Activated CD4-positive, alpha-beta memory T cell treated with anti-CD3 and anti-CD28 coated beads, Interleukin-2, amount 10 ng/mL, durations not matched to agents 7 days and 5 days (primary cell): ENCODE measurements at regions of chr10 and their contacts with region 1.

Region 1: DNA sequence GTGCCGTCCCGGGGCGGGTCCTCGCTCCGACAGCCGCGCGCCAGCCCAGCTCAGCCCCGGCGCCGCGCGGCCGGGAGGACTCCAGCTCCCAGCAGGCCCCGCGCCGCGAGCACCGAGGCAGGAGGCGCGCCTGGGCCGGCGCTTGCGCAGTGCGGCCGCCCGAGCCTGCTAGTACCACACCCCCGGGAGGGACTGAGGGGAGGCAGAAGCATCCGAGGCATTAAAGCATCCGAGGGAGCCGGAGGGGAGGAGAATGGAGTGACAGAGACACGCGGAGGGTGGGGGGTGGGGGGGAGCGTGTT is at the start of gene GRK5:
- DNase-seq: peak; percentile 97
- H3K4me3 Mint-ChIP-seq: peak within 1 kb of the TSS; percentile 92
- H3K27ac Mint-ChIP-seq: peak within 1 kb of the TSS; percentile 97
- H3K4me1 Mint-ChIP-seq: peaks cover 46% of the 10 kb centered on the region
- H3K27me3 Mint-ChIP-seq: no peaks in the 10 kb centered on the region
- total RNA-seq, gene GRK5: 29.8 to 30.6 TPM

Region 2: DNA sequence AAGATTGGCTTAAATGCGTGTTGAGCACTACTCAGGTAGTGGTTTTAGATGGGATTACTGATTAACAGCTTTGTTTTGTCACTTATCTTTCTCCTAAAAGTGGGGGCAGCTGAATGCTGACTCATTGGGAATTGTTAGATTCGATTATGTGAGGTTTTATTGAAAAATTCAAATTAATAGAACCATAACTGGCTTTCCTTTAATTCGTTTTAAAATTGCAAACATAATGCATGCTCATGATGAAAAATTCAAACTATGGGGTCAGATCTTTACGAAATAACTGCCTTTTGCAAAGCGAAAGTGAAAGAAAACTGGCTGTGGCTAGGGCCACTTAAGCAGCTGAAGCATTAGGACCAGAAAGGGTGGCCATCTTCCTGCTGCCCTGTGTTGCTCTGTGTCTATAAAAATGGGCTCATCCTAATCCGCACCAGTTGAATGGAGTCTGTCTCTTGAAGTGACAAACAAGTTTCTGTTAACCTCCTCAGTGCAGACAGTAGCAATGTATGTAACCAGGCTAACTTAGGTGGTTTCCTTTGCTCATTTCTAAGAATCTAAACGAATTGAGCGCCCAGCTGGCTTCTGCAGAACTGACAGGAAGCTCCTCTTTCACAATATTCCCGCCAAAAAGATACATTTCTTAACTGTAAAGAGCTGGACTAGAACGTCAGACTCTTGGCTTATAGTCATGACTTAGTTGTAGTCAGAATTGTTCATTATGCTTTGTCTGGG is 75.6 kb before region 1 on chr10:
- CTCF ChIA-PET with region 1: interaction called, 3 read pairs
- POLR2A ChIA-PET with region 1: interaction called, 12 read pairs
- DNase-seq: peak; percentile 72
- H3K4me3 Mint-ChIP-seq: peak overlapping the region; percentile 73
- H3K27ac Mint-ChIP-seq: peak overlapping the region; percentile 98
- H3K4me1 Mint-ChIP-seq: peaks cover 67% of the 10 kb centered on the region
- H3K27me3 Mint-ChIP-seq: no peaks in the 10 kb centered on the region

Region 3: DNA sequence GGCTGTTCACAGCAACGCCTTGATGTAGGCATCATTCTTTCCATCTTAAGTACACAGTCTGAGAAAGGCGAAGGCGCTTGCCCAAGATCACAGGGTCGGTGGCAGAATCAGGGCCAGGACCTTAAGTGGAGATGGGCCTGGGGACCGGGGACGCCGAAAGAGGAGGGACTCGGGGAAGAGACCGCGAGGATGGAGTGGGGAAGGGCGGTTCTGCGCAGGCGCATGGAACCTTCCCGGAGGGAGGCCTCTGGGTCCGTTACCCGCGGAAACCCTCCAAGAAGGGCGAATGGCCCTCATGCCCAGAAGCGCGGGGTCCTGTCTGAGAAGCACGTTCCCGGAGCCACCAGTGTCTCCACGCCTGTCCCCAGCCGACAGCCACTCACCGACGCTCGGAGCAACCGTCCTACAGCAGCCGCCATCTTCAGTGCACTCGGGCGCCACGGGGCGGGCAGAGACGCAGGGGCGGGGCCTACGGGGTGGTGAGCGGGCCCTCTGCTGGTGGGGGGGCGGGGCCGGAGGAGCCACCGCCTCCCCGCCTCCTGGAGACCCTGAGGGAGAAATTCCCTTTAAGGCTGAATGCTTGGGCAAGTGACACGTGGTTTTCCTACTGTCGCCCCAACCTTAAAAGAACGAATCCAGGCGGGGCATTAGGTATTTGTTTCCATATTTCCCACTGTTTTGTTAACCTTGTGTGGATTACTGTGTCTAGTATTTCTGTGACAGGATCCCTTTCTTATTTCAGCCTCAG is 28.8 kb before region 1 on chr10 and contains the start of gene PRDX3:
- CTCF ChIA-PET with region 1: interaction called, 6 read pairs
- POLR2A ChIA-PET with region 1: interaction called, 11 read pairs
- DNase-seq: peak; percentile 94
- H3K4me3 Mint-ChIP-seq: peak within 1 kb of the TSS; percentile 96
- H3K27ac Mint-ChIP-seq: peak within 1 kb of the TSS; percentile 97
- H3K4me1 Mint-ChIP-seq: peaks cover 41% of the 10 kb centered on the region
- H3K27me3 Mint-ChIP-seq: no peaks in the 10 kb centered on the region
- total RNA-seq, gene PRDX3: 115 to 117 TPM

Region 4: DNA sequence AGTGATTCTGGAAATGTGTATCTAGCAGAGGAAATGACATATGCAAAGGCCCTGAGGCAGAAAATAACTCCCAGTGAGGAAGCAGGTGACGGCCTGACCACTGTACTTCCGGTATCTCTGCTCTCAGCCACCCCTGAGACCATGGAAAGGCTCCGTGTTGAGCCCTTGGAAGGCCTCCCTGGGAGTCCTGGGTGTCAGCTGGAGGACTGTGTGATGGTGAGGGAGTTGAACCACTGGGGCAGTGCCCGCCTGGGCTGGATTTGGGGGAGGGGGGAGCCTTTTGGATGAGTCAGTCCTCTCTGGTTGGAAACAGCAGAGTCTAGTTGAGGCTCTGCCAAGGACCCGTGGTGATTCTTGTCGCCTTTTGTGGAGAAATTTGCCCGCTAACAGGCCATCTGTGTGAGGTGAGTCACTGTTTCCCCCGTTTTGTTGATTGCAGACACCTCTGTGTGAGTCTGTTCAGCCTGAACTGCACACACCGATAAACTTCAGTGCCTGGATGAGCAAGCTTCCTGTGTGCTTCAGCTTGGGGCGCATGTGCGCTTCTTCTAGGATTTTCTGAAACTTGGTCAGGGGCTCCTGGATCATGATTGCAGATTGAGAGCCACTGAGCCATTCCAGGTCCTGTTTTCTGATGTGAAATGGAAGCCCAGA is 98.7 kb after region 1 on chr10:
- CTCF ChIA-PET with region 1: interaction called, 42 read pairs
- POLR2A ChIA-PET with region 1: interaction called, 100 read pairs
- DNase-seq: peak; percentile 92
- H3K4me3 Mint-ChIP-seq: peak overlapping the region; percentile 83
- H3K27ac Mint-ChIP-seq: peak overlapping the region; percentile 100
- H3K4me1 Mint-ChIP-seq: peaks cover 81% of the 10 kb centered on the region
- H3K27me3 Mint-ChIP-seq: peaks cover 14% of the 10 kb centered on the region

Region 5: DNA sequence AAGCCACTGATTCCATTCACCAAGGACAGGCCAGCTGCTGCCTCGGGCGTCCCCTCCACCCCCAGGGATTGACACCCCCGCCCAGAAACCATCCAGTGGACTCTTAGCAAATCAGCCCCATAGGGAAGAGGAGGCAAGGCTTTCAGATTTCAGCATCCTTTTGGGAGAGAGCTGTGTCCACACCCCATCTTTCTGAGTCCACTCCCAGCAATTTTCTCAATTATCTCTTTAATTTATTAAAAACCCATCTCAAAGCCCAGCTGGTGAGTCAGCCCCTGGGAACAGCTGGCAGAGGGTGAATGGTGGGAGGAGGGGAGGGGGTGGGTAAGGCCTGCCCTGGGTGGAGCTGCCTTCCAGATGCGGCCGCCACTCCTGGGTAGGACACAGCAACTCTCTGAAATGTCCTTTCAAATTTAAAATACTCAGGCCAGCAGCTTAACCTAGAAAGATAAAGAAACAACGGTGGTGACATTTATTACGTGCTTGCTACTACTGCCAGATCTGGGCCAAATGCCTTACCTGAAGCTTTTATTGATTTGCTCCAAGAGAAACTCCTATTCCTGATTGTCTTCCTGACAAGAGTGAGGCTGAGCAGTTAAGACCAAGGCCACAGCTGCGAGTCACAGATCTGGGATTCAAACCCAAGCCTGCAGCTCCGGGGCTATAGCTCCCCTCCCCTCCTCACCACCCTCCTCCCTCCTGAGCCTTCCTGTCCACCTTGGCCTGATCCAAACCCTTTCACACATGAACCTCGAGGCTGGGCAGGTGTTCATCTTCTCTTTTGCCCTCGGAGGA is 214.8 kb after region 1 on chr10:
- CTCF ChIA-PET with region 1: interaction called, 49 read pairs
- POLR2A ChIA-PET with region 1: interaction called, 15 read pairs
- DNase-seq: no peak
- H3K4me3 Mint-ChIP-seq: no peak overlapping the region
- H3K27ac Mint-ChIP-seq: no peak overlapping the region
- H3K4me1 Mint-ChIP-seq: no peaks in the 10 kb centered on the region
- H3K27me3 Mint-ChIP-seq: no peaks in the 10 kb centered on the region

Region 6: DNA sequence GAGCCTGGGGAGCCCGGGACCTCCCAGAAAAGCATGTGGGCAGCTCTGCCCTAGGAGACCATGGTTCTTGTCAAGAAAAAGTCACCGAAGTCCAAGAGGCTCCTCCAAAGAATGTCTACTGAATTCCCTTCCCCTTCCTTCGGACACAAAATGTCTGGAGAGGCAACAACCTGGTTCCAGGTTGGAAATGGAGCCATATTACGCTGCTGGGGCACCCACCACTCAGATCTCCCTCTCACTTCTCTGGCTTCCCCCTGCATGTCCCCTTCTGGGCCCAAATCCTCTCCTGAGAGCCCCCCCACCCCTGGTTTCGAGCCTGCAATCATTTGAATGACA is 282.6 kb after region 1 on chr10:
- CTCF ChIA-PET with region 1: interaction called, 17 read pairs
- POLR2A ChIA-PET with region 1: interaction called, 5 read pairs
- DNase-seq: no peak
- H3K4me3 Mint-ChIP-seq: peak overlapping the region; percentile 65
- H3K27ac Mint-ChIP-seq: peak overlapping the region; percentile 85
- H3K4me1 Mint-ChIP-seq: peaks cover 45% of the 10 kb centered on the region
- H3K27me3 Mint-ChIP-seq: no peaks in the 10 kb centered on the region